ENCODE measurements at regions of chr2 and their contacts with region 1.

Region 1: DNA sequence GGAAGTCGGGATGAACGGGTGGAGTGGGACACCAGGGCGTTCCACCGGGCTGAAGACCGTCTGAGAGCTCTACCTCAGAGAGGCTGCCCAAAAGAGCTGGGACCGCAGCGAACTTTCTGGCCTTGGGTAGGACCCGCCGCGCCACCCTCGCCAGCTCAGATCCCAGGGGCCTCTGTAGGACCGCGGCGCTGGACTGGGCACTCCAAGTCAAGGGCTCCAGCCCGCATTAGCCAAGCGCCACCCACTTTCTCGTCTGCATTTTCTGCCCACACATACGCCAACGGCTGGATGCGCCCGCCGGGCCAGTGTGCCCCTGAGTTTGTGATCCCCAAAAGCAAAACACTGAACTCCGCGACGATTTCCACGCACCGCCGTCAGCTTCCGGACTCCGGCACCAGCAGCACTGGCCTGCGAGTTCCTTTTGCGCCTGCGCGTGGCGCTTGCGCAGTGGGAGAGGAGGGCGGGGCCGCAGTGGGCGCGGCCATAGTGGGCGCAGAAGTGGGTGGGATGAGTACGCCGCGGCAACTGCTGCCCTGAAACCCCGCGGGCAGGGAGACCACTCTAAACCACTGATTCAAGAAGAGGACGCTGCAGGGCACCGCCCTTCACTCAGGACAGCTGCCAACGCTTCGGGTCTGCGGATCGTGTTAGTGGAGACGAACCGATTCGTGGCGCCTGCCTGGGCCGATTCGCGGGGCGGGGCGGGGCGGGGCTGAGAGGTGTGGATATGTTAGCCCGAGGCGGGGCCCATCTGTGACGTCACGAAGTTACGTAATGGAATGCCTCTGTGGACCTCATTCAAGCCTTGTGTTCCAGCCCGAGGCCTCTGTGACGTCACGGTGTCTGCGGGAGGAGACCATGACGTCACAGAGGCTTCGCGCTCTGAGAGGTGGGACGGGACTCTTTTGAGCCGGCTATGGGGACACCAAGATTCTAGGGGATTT is 10.5 kb downstream of the OSR1 start:
- DNase-seq: peak; percentile 94
- H3K4me3 Mint-ChIP-seq: peak overlapping the region; percentile 95
- H3K27ac Mint-ChIP-seq: peak overlapping the region; percentile 96
- H3K4me1 Mint-ChIP-seq: peaks cover 26% of the 10 kb centered on the region
- H3K27me3 Mint-ChIP-seq: peaks cover 37% of the 10 kb centered on the region

Region 2: GRCh38 chr2:18520451-18521425 is 827.2 kb before region 1 on chr2:
- CTCF ChIA-PET with region 1: interaction called, 5 read pairs
- intact Hi-C with region 1: loop called (anchors 1 kb)
- DNase-seq: peak; percentile 81
- H3K4me3 Mint-ChIP-seq: no peak overlapping the region
- H3K27ac Mint-ChIP-seq: no peak overlapping the region
- H3K4me1 Mint-ChIP-seq: no peaks in the 10 kb centered on the region
- H3K27me3 Mint-ChIP-seq: peaks cover 18% of the 10 kb centered on the region

Region 3: GRCh38 chr2:19863303-19864041 is 515.6 kb after region 1 on chr2:
- CTCF ChIA-PET with region 1: no interaction called
- intact Hi-C with region 1: loop called (anchors 1 kb)
- DNase-seq: peak; percentile 75
- H3K4me3 Mint-ChIP-seq: no peak overlapping the region
- H3K27ac Mint-ChIP-seq: no peak overlapping the region
- H3K4me1 Mint-ChIP-seq: peaks cover 7% of the 10 kb centered on the region
- H3K27me3 Mint-ChIP-seq: no peaks in the 10 kb centered on the region

Region 4: GRCh38 chr2:19901442-19902215 is 553.7 kb after region 1 on chr2 and contains the start of gene TTC32:
- CTCF ChIA-PET with region 1: no interaction called
- intact Hi-C with region 1: loop called (anchors 1 kb)
- DNase-seq: peak; percentile 96
- H3K4me3 Mint-ChIP-seq: peak within 1 kb of the TSS; percentile 81
- H3K27ac Mint-ChIP-seq: peak within 1 kb of the TSS; percentile 99
- H3K4me1 Mint-ChIP-seq: peaks cover 42% of the 10 kb centered on the region
- H3K27me3 Mint-ChIP-seq: peaks cover 10% of the 10 kb centered on the region
- total RNA-seq, gene TTC32: 17.0 to 19.4 TPM